ENCODE measurements at regions of chr17 and their contacts with region 1.

Region 1: DNA sequence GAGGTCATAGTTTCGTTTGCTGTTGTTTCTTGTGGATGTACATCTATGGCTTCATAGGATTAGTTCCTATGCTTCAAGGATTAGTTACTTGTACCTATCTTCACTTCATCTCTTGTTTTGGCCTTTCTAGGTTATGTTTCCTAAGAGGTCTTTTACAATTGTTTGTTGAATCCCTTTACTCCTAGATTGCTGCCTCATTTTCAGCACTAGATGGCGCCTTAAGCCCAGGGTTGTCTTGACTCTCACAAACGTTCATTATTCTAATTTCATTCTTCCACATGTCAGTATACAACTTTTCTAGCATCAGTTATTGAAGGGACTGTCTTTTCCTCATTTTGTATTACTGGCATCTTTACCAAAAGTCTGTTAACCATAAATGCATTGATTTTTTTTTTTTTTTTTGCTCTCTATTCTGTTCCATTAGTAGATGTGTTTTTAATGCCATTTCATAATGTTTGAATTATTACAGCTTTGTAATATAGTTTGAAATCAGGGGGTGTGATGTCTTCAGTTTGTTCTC is 45.0 kb upstream of the NACA2 start:
- DNase-seq: peak; percentile 77
- H3K4me3 ChIP-seq: no peak overlapping the region
- H3K27ac ChIP-seq: no peak overlapping the region
- H3K4me1 ChIP-seq: no peaks in the 10 kb centered on the region
- H3K27me3 ChIP-seq: no peaks in the 10 kb centered on the region
- CTCF ChIP-seq: peak; percentile 87

Region 2: DNA sequence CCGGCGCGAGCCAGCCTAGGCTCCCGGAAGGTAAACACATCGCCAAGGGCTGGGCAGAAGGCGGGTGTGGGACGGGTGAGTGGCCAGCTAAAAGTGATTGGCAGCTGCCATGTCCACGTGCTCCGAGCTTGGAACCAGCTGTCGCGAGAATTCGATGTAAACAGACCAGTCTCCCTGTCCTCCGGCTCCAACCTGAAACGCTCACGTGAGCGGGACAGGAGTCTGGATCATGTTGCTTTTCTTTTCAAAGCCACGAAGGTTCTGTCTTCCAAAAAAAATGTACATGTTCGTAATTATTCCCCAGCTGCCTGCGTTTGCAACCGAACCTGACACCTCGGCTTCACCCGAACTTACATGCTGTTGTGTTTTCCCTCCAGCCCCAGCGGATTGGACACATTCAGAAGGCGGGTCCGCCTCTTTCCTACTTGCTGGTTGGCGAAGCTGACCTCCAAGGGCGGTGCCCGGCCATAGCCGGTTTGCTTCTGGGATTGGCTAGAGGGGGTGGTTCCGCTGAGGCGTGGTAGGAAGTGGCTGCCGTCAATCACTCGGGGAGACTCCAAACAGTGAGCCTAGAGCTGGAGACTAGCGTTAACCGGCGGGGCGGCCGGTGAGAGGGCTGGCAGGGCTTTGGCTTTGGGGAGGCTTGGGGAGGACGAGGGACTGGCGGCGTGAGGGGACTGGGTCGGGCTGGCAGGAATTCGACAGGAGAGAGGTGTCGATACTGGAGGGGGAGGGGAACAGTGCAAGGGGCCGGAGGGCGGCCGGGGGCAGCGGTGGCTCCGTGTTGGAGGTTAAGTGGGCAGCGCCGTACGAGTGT is 958.5 kb before region 1 on chr17 and contains the start of gene BCAS3:
- CTCF ChIA-PET with region 1: interaction called, 13 read pairs
- POLR2A ChIA-PET with region 1: no interaction called
- intact Hi-C with region 1: no loop called
- DNase-seq: peak; percentile 99
- H3K4me3 ChIP-seq: peak within 1 kb of the TSS; percentile 69
- H3K27ac ChIP-seq: peak within 1 kb of the TSS; percentile 66
- H3K4me1 ChIP-seq: peaks cover 5% of the 10 kb centered on the region
- H3K27me3 ChIP-seq: no peaks in the 10 kb centered on the region
- CTCF ChIP-seq: no peak
- total RNA-seq, gene BCAS3: 14.4 and 23.4 TPM in 2 replicates

Region 3: DNA sequence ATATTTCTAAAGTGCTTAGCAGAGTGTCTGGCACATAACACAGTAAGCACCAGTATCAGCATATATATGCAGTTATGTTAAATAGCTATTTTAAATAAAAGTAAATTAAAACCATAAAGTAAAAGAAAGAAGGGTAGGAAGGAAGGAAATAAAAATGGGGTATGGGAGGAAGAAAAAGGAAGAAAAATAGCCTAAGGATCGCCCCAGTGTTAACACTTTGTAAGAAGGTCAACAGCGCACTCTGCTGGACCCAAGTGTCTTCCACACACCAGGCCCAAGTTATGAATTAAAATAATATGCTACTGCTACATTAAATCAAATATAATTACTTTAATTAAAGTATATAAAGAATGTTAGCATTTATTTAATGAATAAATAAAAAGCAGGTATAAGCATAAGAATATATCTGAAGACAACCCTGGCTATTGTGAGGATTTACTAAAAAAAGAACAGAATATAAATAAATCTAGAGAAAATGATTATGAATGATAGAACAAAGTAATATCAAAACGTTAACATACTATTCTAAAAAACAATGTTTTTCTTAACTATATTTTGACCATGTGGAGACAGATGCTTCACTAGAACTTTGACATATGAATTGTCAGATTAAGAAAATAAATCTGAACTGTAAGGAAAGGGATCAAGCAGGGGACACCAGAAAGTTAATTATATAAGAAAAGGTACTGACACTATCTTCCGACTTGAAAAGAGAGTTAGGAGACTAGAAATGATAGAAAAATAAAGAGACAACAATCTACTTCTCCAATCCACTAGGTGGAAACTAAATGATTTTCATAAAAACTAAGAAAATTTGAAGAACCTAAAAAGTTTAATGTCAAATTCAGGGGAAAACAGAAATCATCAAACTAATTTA is 201.4 kb after region 1 on chr17:
- CTCF ChIA-PET with region 1: no interaction called
- POLR2A ChIA-PET with region 1: no interaction called
- intact Hi-C with region 1: loop called (anchors 1 kb)
- DNase-seq: peak; percentile 76
- H3K4me3 ChIP-seq: no peak overlapping the region
- H3K27ac ChIP-seq: no peak overlapping the region
- H3K4me1 ChIP-seq: no peaks in the 10 kb centered on the region
- H3K27me3 ChIP-seq: no peaks in the 10 kb centered on the region
- CTCF ChIP-seq: peak; percentile 87

Region 4: GRCh38 chr17:62065598-62066468 is 429.9 kb after region 1 on chr17:
- CTCF ChIA-PET with region 1: no interaction called
- POLR2A ChIA-PET with region 1: no interaction called
- intact Hi-C with region 1: loop called (anchors 2 kb)
- DNase-seq: peak; percentile 99
- H3K4me3 ChIP-seq: peak overlapping the region; percentile 89
- H3K27ac ChIP-seq: peak overlapping the region; percentile 97
- H3K4me1 ChIP-seq: peaks cover 24% of the 10 kb centered on the region
- H3K27me3 ChIP-seq: no peaks in the 10 kb centered on the region
- CTCF ChIP-seq: peak; percentile 98

Region 5: GRCh38 chr17:62109378-62109902 is 473.5 kb after region 1 on chr17:
- CTCF ChIA-PET with region 1: interaction called, 6 read pairs
- POLR2A ChIA-PET with region 1: no interaction called
- intact Hi-C with region 1: loop called (anchors 2 kb)
- DNase-seq: peak; percentile 86
- H3K4me3 ChIP-seq: no peak overlapping the region
- H3K27ac ChIP-seq: no peak overlapping the region
- H3K4me1 ChIP-seq: peaks cover 6% of the 10 kb centered on the region
- H3K27me3 ChIP-seq: no peaks in the 10 kb centered on the region
- CTCF ChIP-seq: peak; percentile 85